ENCODE measurements at regions of chr13 and their contacts with region 1.

Region 1: DNA sequence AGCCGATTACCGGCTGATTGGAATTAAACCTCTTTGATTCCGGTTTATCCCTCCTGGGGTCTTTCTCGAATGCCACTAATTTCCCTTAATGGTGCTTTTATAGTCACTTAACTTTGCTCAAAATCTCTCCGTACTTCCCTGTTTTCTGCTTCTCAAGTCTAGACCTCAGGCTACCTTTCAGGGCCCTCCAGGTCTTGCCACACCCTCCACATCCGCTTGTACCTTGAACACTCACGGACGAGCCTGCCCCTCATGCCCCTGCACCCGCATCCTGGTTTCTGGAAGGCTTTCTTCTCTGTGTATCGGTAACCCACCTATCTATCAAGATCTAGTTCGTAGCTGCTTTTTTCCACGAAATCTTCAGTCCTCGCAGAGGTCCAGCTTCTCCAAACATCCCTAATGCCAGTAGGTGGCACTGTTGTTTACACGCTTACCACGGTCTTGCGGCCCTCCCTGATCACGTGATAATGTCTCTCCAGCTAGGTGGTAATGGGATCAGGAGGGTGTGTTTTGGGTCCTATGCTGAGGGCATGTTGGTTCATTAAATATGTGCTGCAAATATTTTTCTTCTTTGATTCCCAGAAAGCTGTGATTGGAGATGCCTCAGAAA is 13.8 kb downstream of the ATP12A start:
- DNase-seq: peak; percentile 62
- ATAC-seq: peak; percentile 70
- H3K4me3 Mint-ChIP-seq: peak overlapping the region; percentile 15
- H3K27ac Mint-ChIP-seq: no peak overlapping the region
- H3K4me1 Mint-ChIP-seq: peaks cover 19% of the 10 kb centered on the region
- H3K27me3 Mint-ChIP-seq: peaks cover 40% of the 10 kb centered on the region

Region 2: DNA sequence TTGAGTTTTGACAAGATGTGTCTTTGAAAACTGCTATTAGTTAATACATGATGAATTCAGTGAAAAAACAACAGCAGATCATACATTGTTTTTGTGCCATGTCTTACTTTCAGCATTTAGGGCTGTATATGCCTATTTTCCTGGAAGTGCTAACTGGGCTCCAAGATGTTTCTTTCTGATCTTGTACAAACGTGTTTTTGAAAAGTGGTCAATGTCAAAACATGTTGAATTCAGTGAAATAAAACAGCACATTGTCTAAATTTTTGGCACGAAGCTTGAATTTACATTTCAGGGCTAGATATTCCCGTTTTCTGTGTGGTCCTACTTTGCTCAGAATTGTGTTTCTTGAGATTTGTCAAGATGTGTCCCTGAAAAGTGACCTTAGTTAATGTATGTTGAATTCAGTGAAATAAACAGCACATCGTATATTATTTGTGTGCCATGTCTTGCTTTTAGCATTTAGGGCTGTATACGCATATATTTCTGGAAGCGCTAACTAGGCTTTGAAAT is 166.6 kb before region 1 on chr13:
- CTCF ChIA-PET with region 1: no interaction called
- POLR2A ChIA-PET with region 1: no interaction called
- DNase-seq: no peak
- ATAC-seq: no peak
- H3K4me3 Mint-ChIP-seq: no peak overlapping the region
- H3K27ac Mint-ChIP-seq: no peak overlapping the region
- H3K4me1 Mint-ChIP-seq: no peaks in the 10 kb centered on the region
- H3K27me3 Mint-ChIP-seq: peaks cover 31% of the 10 kb centered on the region

Region 3: GRCh38 chr13:24709186-24709913 is 15.4 kb after region 1 on chr13:
- CTCF ChIA-PET with region 1: interaction called, 26 read pairs
- POLR2A ChIA-PET with region 1: no interaction called
- DNase-seq: peak; percentile 86
- ATAC-seq: peak; percentile 97
- H3K4me3 Mint-ChIP-seq: peak overlapping the region; percentile 32
- H3K27ac Mint-ChIP-seq: peak overlapping the region; percentile 85
- H3K4me1 Mint-ChIP-seq: peaks cover 46% of the 10 kb centered on the region
- H3K27me3 Mint-ChIP-seq: peaks cover 10% of the 10 kb centered on the region

Region 4: DNA sequence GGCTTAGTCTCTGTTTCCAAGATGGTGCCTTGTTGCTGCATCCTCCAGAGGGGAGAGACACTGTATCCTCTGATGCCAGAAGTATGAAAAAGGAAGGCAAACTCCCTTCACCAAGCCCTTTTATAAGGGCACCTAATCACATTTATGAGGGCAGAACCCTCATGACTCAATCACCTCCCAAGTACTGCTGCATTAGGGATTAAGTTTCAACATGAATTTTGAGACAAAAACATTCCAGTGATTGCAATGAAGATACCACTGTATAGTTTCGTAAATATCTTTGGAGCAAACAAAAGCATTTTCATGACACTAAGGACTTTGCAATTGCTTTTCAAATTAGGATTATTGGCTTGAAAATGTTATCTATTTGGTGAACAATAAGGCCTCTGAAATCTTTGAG is 133.8 kb after region 1 on chr13:
- CTCF ChIA-PET with region 1: no interaction called
- POLR2A ChIA-PET with region 1: no interaction called
- DNase-seq: no peak
- ATAC-seq: no peak
- H3K4me3 Mint-ChIP-seq: no peak overlapping the region
- H3K27ac Mint-ChIP-seq: no peak overlapping the region
- H3K4me1 Mint-ChIP-seq: no peaks in the 10 kb centered on the region
- H3K27me3 Mint-ChIP-seq: peaks cover 18% of the 10 kb centered on the region